ENCODE measurements at regions of chr11 and their contacts with region 1.

Region 1: GRCh38 chr11:128716661-128717210 is 22.9 kb downstream of the FLI1 start:
- DNase-seq: peak; percentile 88
- H3K4me3 Mint-ChIP-seq: peak overlapping the region; percentile 68
- H3K27ac Mint-ChIP-seq: peak overlapping the region; percentile 93
- H3K4me1 Mint-ChIP-seq: peaks cover 90% of the 10 kb centered on the region
- H3K27me3 Mint-ChIP-seq: no peaks in the 10 kb centered on the region

Region 2: GRCh38 chr11:128610721-128611617 is 105.8 kb before region 1 on chr11:
- intact Hi-C with region 1: no loop called
- DNase-seq: peak; percentile 83
- H3K4me3 Mint-ChIP-seq: peak overlapping the region; percentile 79
- H3K27ac Mint-ChIP-seq: peak overlapping the region; percentile 88
- H3K4me1 Mint-ChIP-seq: peaks cover 27% of the 10 kb centered on the region
- H3K27me3 Mint-ChIP-seq: no peaks in the 10 kb centered on the region

Region 3: GRCh38 chr11:128695539-128696221 is 21.1 kb before region 1 on chr11:
- intact Hi-C with region 1: loop called (anchors 1 kb)
- DNase-seq: peak; percentile 83
- H3K4me3 Mint-ChIP-seq: peak overlapping the region; percentile 93
- H3K27ac Mint-ChIP-seq: peak overlapping the region; percentile 92
- H3K4me1 Mint-ChIP-seq: peaks cover 64% of the 10 kb centered on the region
- H3K27me3 Mint-ChIP-seq: peaks cover 19% of the 10 kb centered on the region

Region 4: DNA sequence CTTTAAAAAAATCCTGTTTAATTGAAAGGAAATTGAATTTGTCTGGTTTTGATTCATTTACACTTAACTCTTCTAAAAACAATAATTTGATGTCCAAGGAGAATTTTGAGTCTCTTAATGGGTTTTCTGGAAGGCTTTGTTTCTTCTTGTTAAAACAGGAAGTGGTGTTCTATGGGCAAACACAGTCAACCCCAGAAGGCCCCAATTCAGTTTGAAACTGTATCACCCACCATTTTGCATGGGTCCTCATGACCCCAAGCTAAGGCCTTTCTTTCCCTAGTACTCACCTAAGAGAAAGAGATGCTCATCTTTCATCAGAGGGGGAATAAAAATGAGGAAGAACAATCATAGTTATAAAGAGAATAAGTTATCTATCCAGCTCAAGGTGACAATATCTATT is 12.2 kb before region 1 on chr11:
- intact Hi-C with region 1: loop called (anchors 1 kb)
- DNase-seq: no peak
- H3K4me3 Mint-ChIP-seq: peak overlapping the region; percentile 6
- H3K27ac Mint-ChIP-seq: peak overlapping the region; percentile 58
- H3K4me1 Mint-ChIP-seq: peaks cover 74% of the 10 kb centered on the region
- H3K27me3 Mint-ChIP-seq: no peaks in the 10 kb centered on the region

Region 5: DNA sequence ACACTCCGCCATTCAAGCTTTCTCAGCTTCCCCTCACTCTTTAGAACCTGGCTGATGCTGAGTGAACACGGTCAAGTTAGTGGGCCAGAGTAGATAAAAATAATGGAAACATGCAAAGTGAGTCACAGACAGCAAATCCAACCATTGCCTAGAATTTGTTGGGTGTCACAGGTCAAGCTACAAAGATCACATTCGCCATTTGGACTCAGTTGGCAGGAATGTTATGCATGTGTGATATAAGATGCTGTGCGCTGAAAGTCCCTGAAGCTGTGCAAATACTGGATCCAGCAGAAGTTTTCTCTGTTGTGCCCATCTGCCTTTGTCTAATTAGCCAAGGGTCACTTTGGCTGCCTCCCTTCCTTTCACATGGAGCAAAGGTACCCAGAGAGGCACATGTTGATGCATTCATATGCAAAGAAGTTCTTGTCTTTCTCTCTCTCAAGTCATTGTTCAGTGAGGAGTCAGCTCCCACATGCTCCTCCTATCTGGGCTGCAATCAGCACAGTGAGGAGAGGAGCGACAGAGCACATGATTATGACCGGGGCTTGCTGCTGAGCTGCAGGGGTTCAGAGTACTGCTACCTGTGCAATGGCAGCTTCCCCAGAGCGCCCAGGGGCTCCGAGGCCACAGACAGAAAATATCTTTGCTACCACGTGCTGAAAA is 16.8 kb after region 1 on chr11:
- intact Hi-C with region 1: loop called (anchors 1 kb)
- DNase-seq: peak; percentile 81
- H3K4me3 Mint-ChIP-seq: peak overlapping the region; percentile 72
- H3K27ac Mint-ChIP-seq: peak overlapping the region; percentile 83
- H3K4me1 Mint-ChIP-seq: peaks cover 77% of the 10 kb centered on the region
- H3K27me3 Mint-ChIP-seq: no peaks in the 10 kb centered on the region

Region 6: DNA sequence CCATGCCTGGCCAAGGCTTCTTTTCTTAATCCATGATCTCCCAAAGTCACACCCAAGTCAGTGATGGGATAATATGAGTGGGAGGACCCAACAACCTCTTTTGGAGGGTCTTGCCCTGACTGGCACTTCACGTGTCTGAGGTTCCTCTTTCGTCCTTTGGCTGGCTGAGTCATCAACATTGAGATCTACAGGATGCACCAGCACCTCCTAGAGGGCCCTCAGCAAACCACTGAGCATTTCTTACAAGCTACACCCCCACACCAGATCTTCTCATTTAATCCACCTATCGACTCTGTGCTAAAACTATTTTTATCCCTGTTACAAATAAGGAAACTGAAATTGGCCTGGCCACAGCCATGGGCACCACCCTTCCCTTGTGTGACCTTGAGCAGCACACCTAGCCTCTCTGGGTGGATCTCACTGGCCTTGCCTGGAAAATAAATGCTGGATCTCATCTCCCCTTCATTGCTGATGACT is 40.5 kb after region 1 on chr11:
- intact Hi-C with region 1: loop called (anchors 2 kb)
- DNase-seq: peak; percentile 89
- H3K4me3 Mint-ChIP-seq: peak overlapping the region; percentile 37
- H3K27ac Mint-ChIP-seq: peak overlapping the region; percentile 90
- H3K4me1 Mint-ChIP-seq: peaks cover 59% of the 10 kb centered on the region
- H3K27me3 Mint-ChIP-seq: no peaks in the 10 kb centered on the region